ENCODE measurements at regions of chr7 and their contacts with region 1.

Region 1: DNA sequence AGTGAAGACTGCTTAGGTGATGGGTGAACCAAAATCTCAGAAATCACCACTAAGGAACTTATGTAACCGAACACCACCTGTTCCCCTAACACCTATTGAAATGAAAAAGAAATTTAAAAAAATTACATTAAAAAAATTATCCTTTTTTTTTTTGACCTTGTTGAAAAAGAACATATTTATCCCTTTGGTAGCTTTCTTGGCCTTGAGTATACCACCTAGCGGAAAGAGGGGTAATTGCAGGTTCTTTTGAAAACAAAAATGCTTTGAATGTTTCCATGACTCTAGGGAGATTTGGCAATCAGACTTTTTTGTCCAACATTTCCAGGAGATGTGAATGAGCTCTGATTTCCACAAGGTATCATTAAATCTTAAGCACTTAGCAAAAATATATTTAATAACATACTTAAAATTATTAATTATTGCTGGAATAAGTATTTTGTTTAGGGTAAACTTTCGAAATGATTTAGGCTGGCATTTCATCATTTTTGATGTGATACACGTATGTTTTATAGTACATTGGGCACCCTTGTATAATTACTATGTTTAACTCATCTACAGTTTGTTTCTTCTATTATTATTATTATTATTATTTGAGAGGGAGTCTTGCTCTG is 47.0 kb upstream of the ELMO1 start:
- DNase-seq: no peak
- H3K4me3 Mint-ChIP-seq: no peak overlapping the region
- H3K27ac Mint-ChIP-seq: no peak overlapping the region
- H3K4me1 Mint-ChIP-seq: peaks cover 8% of the 10 kb centered on the region
- H3K27me3 Mint-ChIP-seq: no peaks in the 10 kb centered on the region

Region 2: DNA sequence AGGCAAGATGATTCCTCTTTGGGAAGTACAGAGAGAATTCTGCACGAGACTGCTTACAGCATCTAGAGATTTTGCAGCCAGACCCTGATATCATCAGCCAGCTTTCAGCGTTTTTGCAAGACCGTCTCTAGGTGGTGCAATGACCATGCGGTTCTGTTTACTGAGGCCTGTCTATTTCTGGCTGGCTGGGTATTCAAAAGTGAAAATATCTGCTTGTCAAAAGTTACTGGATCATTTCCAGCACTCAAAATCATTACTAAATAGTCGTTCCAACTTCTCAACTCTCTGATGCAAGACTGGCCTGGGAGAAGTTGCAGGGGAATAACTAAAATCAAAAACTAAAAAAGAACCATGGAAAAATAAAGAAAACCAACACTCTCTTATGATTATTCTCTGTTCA is 287.2 kb before region 1 on chr7:
- CTCF ChIA-PET with region 1: no interaction called
- intact Hi-C with region 1: loop called (anchors 2 kb)
- DNase-seq: peak; percentile 52
- H3K4me3 Mint-ChIP-seq: no peak overlapping the region
- H3K27ac Mint-ChIP-seq: peak overlapping the region; percentile 56
- H3K4me1 Mint-ChIP-seq: peaks cover 23% of the 10 kb centered on the region
- H3K27me3 Mint-ChIP-seq: no peaks in the 10 kb centered on the region

Region 3: DNA sequence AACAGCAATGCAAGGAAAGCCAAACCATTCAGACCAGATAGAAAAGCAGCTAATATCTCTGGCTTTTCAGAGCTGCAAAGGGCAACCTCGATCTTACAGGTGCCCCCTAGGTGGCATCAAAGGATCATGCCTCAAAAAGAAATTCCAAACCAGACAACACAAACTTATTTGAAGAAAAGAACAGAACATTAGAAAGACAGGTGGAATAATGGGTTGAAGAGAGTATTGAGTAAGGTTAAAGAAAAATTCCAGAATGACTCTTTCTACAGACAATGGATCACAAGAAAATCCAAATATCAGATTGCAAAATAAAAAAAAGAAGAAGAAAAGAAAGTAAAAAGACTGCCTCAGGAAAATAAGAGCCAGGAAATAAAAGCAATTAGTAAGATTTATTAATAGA is 260.8 kb before region 1 on chr7:
- CTCF ChIA-PET with region 1: interaction called, 12 read pairs
- intact Hi-C with region 1: loop called (anchors 10 kb)
- DNase-seq: no peak
- H3K4me3 Mint-ChIP-seq: no peak overlapping the region
- H3K27ac Mint-ChIP-seq: no peak overlapping the region
- H3K4me1 Mint-ChIP-seq: peaks cover 16% of the 10 kb centered on the region
- H3K27me3 Mint-ChIP-seq: no peaks in the 10 kb centered on the region

Region 4: GRCh38 chr7:37284805-37285231 is 210.9 kb before region 1 on chr7:
- CTCF ChIA-PET with region 1: interaction called, 5 read pairs
- intact Hi-C with region 1: loop called (anchors 1 kb)
- DNase-seq: peak; percentile 53
- H3K4me3 Mint-ChIP-seq: no peak overlapping the region
- H3K27ac Mint-ChIP-seq: no peak overlapping the region
- H3K4me1 Mint-ChIP-seq: peaks cover 72% of the 10 kb centered on the region
- H3K27me3 Mint-ChIP-seq: no peaks in the 10 kb centered on the region

Measured in activated naive CD4-positive, alpha-beta T cell treated with anti-CD3 and anti-CD28 coated beads for 36 hours (primary cell).